Mammary epithelial cell (primary cell): ENCODE measurements at regions of chr1 and their contacts with region 1.

Region 1: GRCh38 chr1:23634842-23635651 is 56.6 kb upstream of the RPL11 start:
- DNase-seq: peak; percentile 62
- H3K4me3 ChIP-seq: peak overlapping the region; percentile 5 to 19 (median 13)
- H3K27ac ChIP-seq: no peak overlapping the region
- H3K4me1 ChIP-seq: no peaks in the 10 kb centered on the region
- H3K27me3 ChIP-seq: no peaks in the 10 kb centered on the region
- CTCF ChIP-seq: peak; percentile 87 to 95

Region 2: DNA sequence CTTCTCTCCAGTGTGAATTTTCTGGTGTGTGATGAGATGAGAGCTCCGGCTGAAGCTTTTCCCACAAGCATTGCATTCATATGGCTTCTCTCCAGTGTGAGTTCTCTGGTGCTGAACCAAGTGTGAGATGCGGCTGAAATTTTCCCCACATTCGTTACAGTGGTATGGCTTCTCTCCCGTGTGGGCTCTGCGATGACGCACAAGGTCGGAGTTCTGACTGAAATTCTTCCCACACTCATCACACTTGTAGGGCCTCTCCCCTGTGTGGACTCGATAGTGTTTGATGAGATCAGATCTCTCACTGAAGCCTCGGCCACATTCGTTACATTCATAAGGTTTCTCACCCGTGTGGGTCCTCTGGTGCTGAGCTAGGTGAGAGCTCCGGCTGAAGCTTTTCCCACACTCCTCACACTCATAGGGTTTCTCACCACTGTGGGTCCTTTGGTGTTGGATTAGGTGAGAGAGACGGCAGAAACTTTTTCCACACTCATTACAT is 272.8 kb before region 1 on chr1:
- CTCF ChIA-PET with region 1: no interaction called
- dilution Hi-C with region 1: loop called (anchors 5 kb)
- in situ Hi-C with region 1: no loop called
- intact Hi-C with region 1: no loop called
- DNase-seq: no peak
- H3K4me3 ChIP-seq: no peak overlapping the region
- H3K27ac ChIP-seq: no peak overlapping the region
- H3K4me1 ChIP-seq: peaks cover 12% of the 10 kb centered on the region
- H3K27me3 ChIP-seq: no peaks in the 10 kb centered on the region
- CTCF ChIP-seq: no peak

Region 3: GRCh38 chr1:23559136-23559984 is 75.7 kb before region 1 on chr1 and contains the start of gene ID3:
- CTCF ChIA-PET with region 1: interaction called, 9 read pairs
- dilution Hi-C with region 1: no loop called
- in situ Hi-C with region 1: no loop called
- intact Hi-C with region 1: loop called (anchors 1 kb)
- DNase-seq: peak; percentile 96
- H3K4me3 ChIP-seq: peak within 1 kb of the TSS; percentile 61 to 76 (median 75)
- H3K27ac ChIP-seq: peak within 1 kb of the TSS; percentile 76
- H3K4me1 ChIP-seq: peaks cover 48% of the 10 kb centered on the region
- H3K27me3 ChIP-seq: no peaks in the 10 kb centered on the region
- CTCF ChIP-seq: no peak
- total RNA-seq, gene ID3: 53.6 to 53.8 TPM

Region 4: GRCh38 chr1:23591460-23592208 is 43.4 kb before region 1 on chr1:
- CTCF ChIA-PET with region 1: no interaction called
- dilution Hi-C with region 1: loop called (anchors 5 kb)
- in situ Hi-C with region 1: no loop called
- intact Hi-C with region 1: loop called (anchors 1 kb)
- DNase-seq: no peak
- H3K4me3 ChIP-seq: no peak overlapping the region
- H3K27ac ChIP-seq: peak overlapping the region; percentile 81
- H3K4me1 ChIP-seq: peaks cover 58% of the 10 kb centered on the region
- H3K27me3 ChIP-seq: no peaks in the 10 kb centered on the region
- CTCF ChIP-seq: no peak

Region 5: DNA sequence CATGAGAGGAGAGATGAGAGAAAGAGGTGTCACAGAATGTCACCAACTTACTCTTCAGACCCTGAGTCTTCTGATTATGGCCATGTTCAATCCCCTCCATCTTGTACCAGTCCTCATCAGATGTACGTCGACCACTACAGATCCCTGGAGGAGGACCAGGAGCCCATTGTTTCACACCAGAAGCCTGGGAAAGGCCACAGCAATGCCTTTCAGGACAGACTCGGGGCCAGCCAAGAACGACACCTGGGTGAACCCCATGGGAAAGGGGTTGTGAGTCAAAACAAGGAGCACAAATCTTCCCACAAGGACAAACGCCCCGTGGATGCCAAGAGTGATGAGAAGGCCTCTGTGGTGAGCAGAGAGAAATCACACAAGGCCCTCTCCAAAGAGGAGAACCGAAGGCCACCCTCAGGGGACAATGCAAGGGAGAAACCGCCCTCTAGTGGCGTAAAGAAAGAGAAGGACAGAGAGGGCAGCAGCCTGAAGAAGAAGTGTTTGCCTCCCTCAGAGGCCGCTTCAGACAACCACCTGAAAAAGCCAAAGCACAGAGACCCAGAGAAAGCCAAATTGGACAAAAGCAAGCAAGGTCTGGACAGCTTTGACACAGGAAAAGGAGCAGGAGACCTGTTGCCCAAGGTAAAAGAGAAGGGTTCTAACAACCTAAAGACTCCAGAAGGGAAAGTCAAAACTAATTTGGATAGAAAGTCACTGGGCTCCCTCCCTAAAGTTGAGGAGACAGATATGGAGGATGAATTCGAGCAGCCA is 116.2 kb after region 1 on chr1:
- CTCF ChIA-PET with region 1: interaction called, 3 read pairs
- dilution Hi-C with region 1: no loop called
- in situ Hi-C with region 1: no loop called
- intact Hi-C with region 1: loop called (anchors 5 kb)
- DNase-seq: peak; percentile 54
- H3K4me3 ChIP-seq: no peak overlapping the region
- H3K27ac ChIP-seq: no peak overlapping the region
- H3K4me1 ChIP-seq: peaks cover 9% of the 10 kb centered on the region
- H3K27me3 ChIP-seq: no peaks in the 10 kb centered on the region
- CTCF ChIP-seq: peak; percentile 75 to 79

Region 6: GRCh38 chr1:24635195-24635843 is 1000.3 kb after region 1 on chr1:
- CTCF ChIA-PET with region 1: no interaction called
- dilution Hi-C with region 1: no loop called
- in situ Hi-C with region 1: no loop called
- intact Hi-C with region 1: no loop called
- DNase-seq: peak; percentile 61
- H3K4me3 ChIP-seq: no peak overlapping the region
- H3K27ac ChIP-seq: no peak overlapping the region
- H3K4me1 ChIP-seq: no peaks in the 10 kb centered on the region
- H3K27me3 ChIP-seq: no peaks in the 10 kb centered on the region
- CTCF ChIP-seq: peak; percentile 58 to 72